SK-N-SH (cell line): ENCODE measurements at regions of chr17 and their contacts with region 1.

Region 1: GRCh38 chr17:80008383-80008840 is 27.3 kb downstream of the TBC1D16 start:
- DNase-seq: peak; percentile 98
- H3K4me3 ChIP-seq: no peak overlapping the region; a peak in 1 of 4 replicates
- H3K27ac ChIP-seq: no peak overlapping the region
- H3K4me1 ChIP-seq: peaks cover 0 to 5% of the 10 kb centered on the region in 2 experiments; a peak in 1 of 4 replicates
- H3K27me3 ChIP-seq: no peaks in the 10 kb centered on the region
- CTCF ChIP-seq: peak; percentile 98
- EP300 ChIP-seq: no peak
- RAD21 ChIP-seq: peak; percentile 66

Region 2: GRCh38 chr17:79749156-79749815 is 259.1 kb before region 1 on chr17:
- CTCF ChIA-PET with region 1: interaction called, 32 read pairs
- POLR2A ChIA-PET with region 1: no interaction called
- DNase-seq: no peak
- H3K4me3 ChIP-seq: no peak overlapping the region
- H3K27ac ChIP-seq: no peak overlapping the region
- H3K4me1 ChIP-seq: peaks cover 0 to 6% of the 10 kb centered on the region in 2 experiments; a peak in 1 of 4 replicates
- H3K27me3 ChIP-seq: peaks cover 22% of the 10 kb centered on the region
- CTCF ChIP-seq: no peak
- EP300 ChIP-seq: no peak
- RAD21 ChIP-seq: no peak

Region 3: GRCh38 chr17:79844869-79845600 is 163.4 kb before region 1 on chr17:
- CTCF ChIA-PET with region 1: interaction called, 22 read pairs
- POLR2A ChIA-PET with region 1: no interaction called
- DNase-seq: peak; percentile 98
- H3K4me3 ChIP-seq: peak overlapping the region in 1 of 2 experiments; percentile 15; a peak in 1 of 4 replicates
- H3K27ac ChIP-seq: no peak overlapping the region
- H3K4me1 ChIP-seq: peaks cover 10 to 59% of the 10 kb centered on the region in 2 experiments; a peak in 3 of 4 replicates
- H3K27me3 ChIP-seq: peaks cover 35% of the 10 kb centered on the region
- CTCF ChIP-seq: peak; percentile 65
- EP300 ChIP-seq: no peak
- RAD21 ChIP-seq: peak; percentile 64

Region 4: DNA sequence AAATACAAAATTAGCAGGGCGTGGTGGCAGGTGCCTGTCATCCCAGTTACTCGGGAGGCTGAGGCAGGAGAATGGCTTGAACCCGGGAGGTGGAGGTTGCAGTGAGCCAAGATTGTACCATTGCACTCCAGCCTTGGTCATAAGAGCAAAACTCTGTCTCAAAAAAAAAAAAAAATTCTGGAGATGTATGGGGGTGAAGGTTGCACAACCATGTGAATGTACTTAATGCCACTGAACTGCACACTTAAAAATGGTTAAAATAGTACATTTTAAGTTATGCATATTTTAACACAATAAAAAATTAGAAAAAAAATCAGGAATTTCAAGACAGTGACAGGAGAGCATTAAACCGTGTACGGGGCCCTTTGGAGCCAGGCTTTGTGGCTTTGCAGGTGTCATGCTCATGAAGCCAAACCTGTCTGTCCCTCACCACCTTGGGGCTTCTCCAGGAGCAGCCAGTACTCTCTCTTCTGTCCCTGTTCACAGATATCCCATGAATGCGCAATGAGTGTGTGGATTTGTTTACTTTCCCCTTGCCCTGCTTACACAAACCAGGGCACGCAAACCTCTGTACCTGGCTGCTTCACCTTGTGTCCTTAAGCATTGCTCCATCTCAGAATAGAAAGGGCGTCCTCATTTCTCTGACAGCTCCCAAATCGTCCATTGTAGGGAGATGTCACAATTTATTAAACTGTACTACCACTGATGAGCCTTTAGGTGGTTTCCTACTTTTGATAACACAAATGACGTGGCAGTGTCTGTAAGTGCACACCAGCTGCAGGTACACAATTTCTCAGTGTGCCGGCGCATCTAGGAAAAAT is 111.0 kb before region 1 on chr17:
- CTCF ChIA-PET with region 1: no interaction called
- POLR2A ChIA-PET with region 1: no interaction called
- DNase-seq: no peak
- H3K4me3 ChIP-seq: no peak overlapping the region
- H3K27ac ChIP-seq: no peak overlapping the region
- H3K4me1 ChIP-seq: no peaks in the 10 kb centered on the region
- H3K27me3 ChIP-seq: peaks cover 30% of the 10 kb centered on the region; the same call in 1 of the 2 replicates
- CTCF ChIP-seq: no peak
- EP300 ChIP-seq: no peak
- RAD21 ChIP-seq: no peak

Region 5: GRCh38 chr17:79991140-79991923 is 17.1 kb before region 1 on chr17:
- CTCF ChIA-PET with region 1: interaction called, 209 read pairs
- POLR2A ChIA-PET with region 1: no interaction called
- DNase-seq: peak; percentile 100
- H3K4me3 ChIP-seq: no peak overlapping the region
- H3K27ac ChIP-seq: no peak overlapping the region; a peak in 1 of 4 replicates
- H3K4me1 ChIP-seq: peaks cover 21 to 40% of the 10 kb centered on the region in 2 experiments; a peak in 3 of 4 replicates
- H3K27me3 ChIP-seq: no peaks in the 10 kb centered on the region
- CTCF ChIP-seq: peak; percentile 46
- EP300 ChIP-seq: no peak
- RAD21 ChIP-seq: peak; percentile 78

Region 6: DNA sequence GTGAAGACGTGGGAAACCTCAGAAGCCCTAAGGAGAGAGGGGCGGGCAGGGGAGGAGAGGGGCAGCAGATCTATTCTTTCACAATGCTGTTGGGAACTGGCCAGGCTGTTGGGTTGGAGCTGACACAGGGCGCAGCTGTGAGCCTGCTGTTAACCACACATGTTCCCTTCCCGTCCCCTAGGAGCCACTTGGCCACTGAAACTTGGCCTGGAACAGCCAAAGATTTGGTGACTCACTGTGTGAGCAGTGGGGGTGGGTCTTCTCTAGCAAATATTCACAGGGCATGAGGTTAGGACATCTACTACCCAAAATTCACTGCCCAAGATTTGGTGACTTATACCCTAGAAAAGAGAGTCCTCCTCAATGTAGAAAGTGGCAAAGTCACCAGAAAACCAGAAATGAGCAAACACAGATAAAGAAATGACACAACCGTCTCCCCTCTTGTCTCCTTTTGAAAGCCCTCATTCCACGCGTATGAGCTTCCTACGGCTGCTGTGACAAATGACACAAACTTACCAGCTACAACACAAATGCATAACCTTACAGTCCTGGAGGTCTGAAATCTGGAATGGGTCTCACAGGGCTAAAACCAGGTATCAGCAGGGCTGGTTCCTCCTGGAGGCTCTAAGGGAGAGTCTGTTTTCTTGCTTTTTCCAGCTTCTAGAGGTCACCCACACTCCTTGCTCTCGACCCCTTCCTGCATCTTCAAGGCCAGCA is 21.0 kb after region 1 on chr17:
- CTCF ChIA-PET with region 1: interaction called, 72 read pairs
- POLR2A ChIA-PET with region 1: interaction called, 4 read pairs
- DNase-seq: no peak
- H3K4me3 ChIP-seq: no peak overlapping the region
- H3K27ac ChIP-seq: no peak overlapping the region
- H3K4me1 ChIP-seq: peaks cover 8 to 35% of the 10 kb centered on the region in 2 experiments; a peak in 3 of 4 replicates
- H3K27me3 ChIP-seq: no peaks in the 10 kb centered on the region
- CTCF ChIP-seq: no peak
- EP300 ChIP-seq: no peak
- RAD21 ChIP-seq: no peak

Region 7: DNA sequence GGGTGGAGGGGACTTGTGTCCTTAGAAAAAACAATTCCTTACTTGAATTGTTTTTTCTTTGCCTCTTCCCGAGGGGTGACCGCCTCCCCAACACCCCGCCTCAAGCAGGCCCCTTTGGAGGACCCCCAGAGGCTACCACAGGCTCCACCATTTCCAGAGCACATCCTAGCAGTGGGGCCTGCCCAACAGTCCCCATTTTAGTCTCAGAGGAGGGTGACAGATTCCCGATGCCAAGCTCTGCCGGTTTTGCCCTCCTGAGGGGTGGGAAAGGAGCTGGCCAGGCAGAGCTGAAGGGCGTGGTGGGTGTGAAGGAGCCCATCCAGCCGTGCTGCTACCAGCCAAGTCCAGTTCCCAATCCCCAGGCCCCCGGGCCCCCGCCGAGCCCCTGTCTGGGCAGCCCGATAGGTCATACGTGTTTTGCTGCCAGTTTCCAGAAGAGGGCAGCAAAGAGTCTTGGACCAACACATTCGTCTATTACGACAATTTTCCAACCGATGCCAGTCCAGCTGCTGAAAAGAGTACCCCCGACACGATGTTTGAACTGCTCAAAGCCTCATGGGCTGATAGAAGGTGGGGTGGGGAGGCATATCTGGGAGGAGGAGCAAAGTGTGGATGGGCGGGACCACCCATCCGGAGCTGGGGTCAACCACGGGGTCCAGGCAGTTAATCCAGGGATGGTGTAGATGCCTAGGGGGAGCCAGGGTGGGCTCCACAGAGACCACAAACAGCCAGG is 74.2 kb after region 1 on chr17:
- CTCF ChIA-PET with region 1: interaction called, 21 read pairs
- POLR2A ChIA-PET with region 1: no interaction called
- DNase-seq: peak; percentile 94
- H3K4me3 ChIP-seq: no peak overlapping the region; a peak in 1 of 4 replicates
- H3K27ac ChIP-seq: no peak overlapping the region
- H3K4me1 ChIP-seq: peaks cover 0 to 6% of the 10 kb centered on the region in 2 experiments; a peak in 1 of 4 replicates
- H3K27me3 ChIP-seq: no peaks in the 10 kb centered on the region
- CTCF ChIP-seq: peak; percentile 90
- EP300 ChIP-seq: no peak
- RAD21 ChIP-seq: peak; percentile 90

Region 8: GRCh38 chr17:80237351-80237750 is 228.9 kb after region 1 on chr17:
- CTCF ChIA-PET with region 1: no interaction called
- POLR2A ChIA-PET with region 1: no interaction called
- DNase-seq: no peak
- H3K4me3 ChIP-seq: no peak overlapping the region
- H3K27ac ChIP-seq: no peak overlapping the region
- H3K4me1 ChIP-seq: no peaks in the 10 kb centered on the region
- H3K27me3 ChIP-seq: no peaks in the 10 kb centered on the region
- CTCF ChIP-seq: no peak
- EP300 ChIP-seq: no peak
- RAD21 ChIP-seq: no peak